MCF 10A (cell line): ENCODE measurements at regions of chr2 and their contacts with region 1.

Region 1: DNA sequence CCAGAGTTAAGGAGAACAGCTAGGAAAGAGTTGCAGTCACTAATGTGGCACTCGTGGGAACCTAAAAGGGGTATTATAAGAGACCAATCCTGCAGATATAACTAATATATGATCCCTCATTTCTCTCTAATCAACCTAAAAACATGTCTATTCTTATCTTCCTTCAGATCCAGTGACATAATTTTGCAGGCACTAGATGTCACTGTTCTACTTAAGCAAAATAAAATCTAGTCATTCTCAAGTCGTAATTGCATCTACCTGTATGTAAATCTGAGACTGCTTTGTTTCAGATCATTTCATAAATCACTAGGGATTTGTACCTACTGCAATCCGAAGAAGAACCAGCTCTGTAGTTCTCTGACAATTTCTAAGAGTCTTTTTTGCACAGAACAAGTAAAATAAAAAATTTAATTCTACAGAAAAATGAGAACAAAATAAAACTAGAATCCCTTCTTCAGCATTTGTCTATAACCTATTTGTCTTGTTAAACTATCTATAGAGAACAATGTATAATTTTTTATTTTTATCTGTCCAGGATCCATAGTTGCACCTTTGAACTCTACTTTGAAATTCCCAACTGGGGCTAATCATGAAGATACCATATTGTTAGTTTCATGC is 56.5 kb upstream of the ERBB4 start:
- DNase-seq: peak; percentile 49
- H3K4me3 Mint-ChIP-seq: no peak overlapping the region
- H3K27ac Mint-ChIP-seq: no peak overlapping the region
- H3K4me1 Mint-ChIP-seq: peaks cover 7% of the 10 kb centered on the region
- H3K27me3 Mint-ChIP-seq: no peaks in the 10 kb centered on the region
- CTCF ChIP-seq: peak; percentile 48

Region 2: DNA sequence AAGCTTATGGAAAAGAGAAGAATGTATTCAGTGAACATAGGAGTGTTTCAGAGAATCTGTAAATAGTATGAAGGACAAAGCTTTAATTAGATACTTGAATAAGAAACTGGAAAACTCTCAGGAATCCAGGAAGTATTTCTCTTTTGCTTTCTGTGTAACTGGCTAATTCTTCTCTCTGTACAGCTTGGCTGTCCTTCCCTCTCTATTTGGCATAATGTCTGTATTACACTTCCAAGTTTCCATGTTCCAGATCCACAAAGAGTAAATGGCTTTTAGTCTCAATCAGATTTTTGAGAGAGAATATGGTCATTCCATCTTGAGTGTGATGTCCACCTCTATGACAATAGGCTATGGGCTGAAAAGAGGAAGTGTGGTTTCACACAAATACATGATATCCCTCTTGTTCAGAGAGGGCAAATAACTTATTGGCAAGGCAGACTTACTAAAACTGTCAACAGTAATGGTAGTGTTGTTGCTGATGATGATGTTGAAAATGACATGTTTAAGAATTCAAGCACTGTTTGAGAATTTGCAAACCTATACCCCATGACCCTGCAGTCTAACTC is 72.7 kb after region 1 on chr2:
- CTCF ChIA-PET with region 1: no interaction called
- POLR2A ChIA-PET with region 1: no interaction called
- intact Hi-C with region 1: loop called (anchors 2 kb)
- DNase-seq: no peak
- H3K4me3 Mint-ChIP-seq: no peak overlapping the region
- H3K27ac Mint-ChIP-seq: no peak overlapping the region
- H3K4me1 Mint-ChIP-seq: no peaks in the 10 kb centered on the region
- H3K27me3 Mint-ChIP-seq: no peaks in the 10 kb centered on the region
- CTCF ChIP-seq: no peak

Region 3: DNA sequence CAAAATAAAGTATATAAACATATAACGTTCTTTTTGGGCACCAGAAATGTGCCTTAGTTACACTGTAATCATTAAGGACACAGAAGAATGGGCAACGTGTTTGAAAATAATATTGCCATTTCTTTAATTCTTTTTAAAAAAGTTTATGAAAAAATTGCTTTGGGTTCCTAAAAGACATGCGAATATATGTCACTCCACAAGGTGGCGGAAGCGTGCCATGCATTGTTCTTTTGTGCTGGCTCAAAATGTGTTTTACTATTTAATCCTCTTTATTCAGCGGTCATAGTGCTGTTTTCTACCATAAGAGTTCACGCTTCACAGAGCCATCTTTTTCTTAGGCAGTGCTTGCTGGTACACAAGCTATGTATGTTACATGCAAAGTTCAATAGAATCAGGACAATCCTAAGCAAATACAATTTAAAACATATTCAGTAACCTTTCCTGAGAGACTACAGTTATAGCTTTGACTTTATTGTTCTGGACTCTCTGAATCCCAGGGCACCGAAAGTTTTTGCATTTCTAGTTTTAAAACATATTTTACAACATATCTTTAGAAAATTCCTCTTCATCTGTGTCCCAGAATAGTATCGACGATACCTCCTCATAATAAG is 91.2 kb after region 1 on chr2:
- CTCF ChIA-PET with region 1: interaction called, 7 read pairs
- POLR2A ChIA-PET with region 1: no interaction called
- intact Hi-C with region 1: loop called (anchors 1 kb)
- DNase-seq: peak; percentile 75
- H3K4me3 Mint-ChIP-seq: no peak overlapping the region
- H3K27ac Mint-ChIP-seq: no peak overlapping the region
- H3K4me1 Mint-ChIP-seq: peaks cover 6% of the 10 kb centered on the region
- H3K27me3 Mint-ChIP-seq: no peaks in the 10 kb centered on the region
- CTCF ChIP-seq: peak; percentile 91